ENCODE measurements at regions of chr12 and their contacts with region 1.

Region 1: DNA sequence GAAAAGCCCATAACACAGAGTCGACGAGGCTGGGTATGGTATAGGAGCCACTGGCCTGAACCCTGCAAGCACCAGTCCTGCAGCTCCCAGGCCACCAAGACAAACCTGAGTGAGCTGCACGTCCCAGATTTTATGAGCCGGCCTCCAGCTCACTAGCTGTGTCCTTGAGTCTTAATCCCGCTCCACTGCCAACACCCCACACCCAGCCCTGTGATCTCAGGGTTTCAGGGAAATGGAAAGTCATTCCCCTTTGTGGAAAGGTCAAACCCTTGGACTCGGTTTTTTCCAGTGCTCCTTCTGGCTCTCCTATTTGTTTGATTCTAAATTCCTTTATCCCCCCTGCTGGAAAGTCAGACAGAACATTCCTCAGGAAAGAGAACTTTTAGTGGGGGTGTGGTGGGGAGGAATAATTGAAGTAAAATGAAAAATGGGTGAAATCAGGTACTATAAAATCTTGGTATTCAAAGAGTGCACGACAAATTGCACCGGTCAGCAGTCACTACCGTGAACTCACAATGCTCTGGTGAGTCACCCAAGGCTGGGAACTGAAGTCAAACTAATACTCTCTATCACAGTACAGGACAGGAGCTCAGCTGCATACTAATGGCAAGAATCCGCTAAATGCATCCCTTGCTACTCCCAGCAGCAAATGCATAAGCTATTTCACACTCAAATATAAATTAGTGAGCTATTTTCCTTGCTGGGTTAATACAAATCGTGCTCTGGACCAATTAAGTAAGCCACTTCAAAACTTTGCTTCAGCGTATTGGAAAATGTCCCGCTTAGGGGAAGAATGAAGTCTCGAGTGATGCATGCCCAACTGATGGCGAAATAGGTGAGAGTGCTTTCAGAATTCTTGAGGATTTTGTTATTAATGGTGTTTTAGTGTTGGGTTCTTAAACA is 9.0 kb downstream of the PITPNM2 start:
- DNase-seq: peak; percentile 64
- ATAC-seq: peak; percentile 83

Region 2: DNA sequence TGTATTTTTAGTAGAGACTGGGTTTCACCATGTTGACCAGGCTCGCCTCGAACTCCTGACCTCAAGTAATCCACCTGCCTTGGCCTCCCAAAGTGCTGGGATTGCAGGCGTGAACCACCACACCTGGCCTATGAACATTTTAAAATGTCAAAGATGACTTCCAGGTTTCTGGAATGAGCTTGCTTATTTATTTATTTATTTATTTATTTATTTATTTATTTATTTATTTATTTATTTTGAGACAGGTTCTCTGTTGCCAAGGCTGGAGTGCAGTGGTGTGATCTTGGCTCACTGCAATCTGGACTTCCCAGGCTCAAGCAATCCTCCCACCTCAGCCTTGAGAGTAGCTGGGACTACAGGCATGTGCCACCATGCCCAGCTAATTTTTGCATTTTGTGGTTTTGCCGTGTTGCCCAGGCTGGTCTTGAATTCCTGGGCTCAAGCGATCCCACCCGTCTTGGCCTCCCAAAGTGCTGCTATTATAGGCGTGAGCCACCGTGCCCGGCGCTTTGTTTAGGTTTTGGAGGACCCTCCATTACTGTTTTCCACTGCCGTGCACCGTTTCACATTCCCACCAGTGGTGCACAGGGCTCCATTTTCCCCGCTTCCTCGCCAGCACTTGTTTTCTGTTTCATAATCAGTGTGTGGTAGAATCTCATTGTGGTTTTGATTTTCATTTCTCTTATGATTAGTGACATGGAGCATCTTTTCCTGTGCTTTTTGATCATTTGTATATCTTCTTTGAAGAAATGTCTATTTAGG is 1229.9 kb before region 1 on chr12:
- intact Hi-C with region 1: no loop called
- DNase-seq: no peak
- ATAC-seq: no peak

Region 3: DNA sequence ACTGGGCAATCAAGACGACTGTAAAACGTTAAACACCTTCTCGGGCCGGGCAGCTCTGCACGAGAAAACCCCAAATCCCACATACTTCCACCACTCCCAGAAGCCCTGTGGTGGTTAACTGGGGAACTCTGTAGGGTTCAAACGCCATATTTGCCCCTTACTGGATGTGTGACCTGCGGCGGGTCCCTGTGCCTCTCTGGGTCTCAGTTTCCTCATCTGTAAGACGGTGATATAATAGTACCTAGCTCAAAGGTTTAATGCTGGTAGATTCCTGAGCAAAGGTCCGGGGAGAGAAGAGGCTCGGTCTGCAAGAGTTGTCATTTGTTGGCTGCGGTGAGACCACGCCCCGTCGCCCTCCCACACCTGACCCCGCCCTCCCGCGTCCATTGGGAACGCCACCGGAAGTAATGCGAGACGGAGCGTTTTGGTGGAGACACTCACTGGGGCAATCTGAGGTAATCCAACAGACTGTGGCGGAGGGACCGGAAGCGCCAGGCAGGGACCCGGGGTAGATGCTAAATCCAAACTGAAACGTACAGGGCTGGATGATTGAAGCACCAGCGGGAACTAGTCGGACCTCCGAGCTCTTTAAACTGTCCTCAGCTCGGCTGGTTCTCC is 167.5 kb before region 1 on chr12:
- intact Hi-C with region 1: loop called (anchors 10 kb)
- DNase-seq: peak; percentile 99
- ATAC-seq: peak; percentile 96

Region 4: DNA sequence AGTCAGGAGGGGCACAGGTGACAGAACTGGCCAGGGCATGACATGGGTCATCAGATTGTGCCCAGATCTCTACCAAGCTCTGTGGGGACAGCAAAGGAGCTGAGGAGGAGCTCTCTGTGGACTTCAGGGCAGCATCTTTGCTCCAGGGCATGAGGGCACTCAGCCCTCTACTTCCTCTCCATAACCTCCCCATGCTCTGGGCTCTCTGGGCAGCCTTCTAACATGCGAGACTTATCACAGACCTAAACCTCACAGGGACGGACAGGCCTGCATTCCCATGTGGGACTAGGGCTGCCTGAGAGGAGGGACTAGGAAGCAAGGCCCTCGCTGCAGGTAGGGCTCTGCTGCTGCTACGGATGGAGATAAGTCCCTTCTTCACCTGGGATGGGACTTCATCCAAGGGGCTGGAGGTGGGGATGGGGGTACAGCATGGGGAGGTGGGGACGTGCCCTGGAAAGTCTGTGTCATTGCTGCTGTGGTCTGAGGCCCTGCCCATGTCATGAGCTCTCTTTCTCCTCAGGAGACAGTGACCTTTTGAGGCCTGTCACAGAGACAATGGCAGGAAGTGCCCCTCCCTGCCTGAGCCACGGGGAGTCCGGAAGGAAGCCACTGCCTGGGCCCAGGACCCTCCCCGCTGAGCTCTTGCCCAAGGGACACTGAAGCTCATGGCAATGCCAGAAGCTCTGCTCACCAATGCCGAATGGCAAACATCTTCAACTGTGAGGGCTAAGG is 35.1 kb before region 1 on chr12:
- intact Hi-C with region 1: no loop called
- DNase-seq: peak; percentile 72
- ATAC-seq: peak; percentile 40

Measured in Right ventricle myocardium superior (tissue), 1 donor.